PC-9 (cell line): ENCODE measurements at regions of chr21 and their contacts with region 1.

Region 1: DNA sequence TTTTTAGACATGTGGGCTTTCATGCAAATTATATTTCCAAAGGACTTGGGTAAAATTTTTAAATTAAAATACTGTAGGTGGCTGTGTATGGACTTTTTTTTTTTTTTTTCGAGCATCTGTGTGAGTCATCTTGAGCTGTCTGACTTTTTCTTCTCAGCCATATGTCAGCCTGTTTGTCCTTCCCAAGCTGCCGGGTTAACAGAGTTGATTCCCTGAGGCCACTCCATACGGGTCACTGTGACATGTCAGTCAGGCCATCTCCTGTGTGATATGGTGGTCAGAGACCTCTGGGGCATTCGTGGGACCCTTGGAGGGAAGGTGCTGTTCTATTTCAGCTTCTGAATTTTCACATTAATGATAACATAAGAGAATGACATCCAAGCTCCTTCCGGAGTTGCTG is 148.3 kb downstream of the KCNJ6 start:
- DNase-seq: no peak
- H3K4me3 ChIP-seq: no peak overlapping the region
- H3K27ac ChIP-seq: no peak overlapping the region
- H3K4me1 ChIP-seq: no peaks in the 10 kb centered on the region
- H3K27me3 ChIP-seq: peaks cover 11% of the 10 kb centered on the region; the same call in 1 of the 2 replicates
- CTCF ChIP-seq: no peak

Region 2: GRCh38 chr21:37631319-37632117 is 136.5 kb before region 1 on chr21:
- CTCF ChIA-PET with region 1: no interaction called
- POLR2A ChIA-PET with region 1: no interaction called
- intact Hi-C with region 1: no loop called
- DNase-seq: peak; percentile 21 to 45
- H3K4me3 ChIP-seq: peak overlapping the region; percentile 18; the same call in 1 of the 2 replicates
- H3K27ac ChIP-seq: no peak overlapping the region
- H3K4me1 ChIP-seq: peaks cover 18% of the 10 kb centered on the region
- H3K27me3 ChIP-seq: no peaks in the 10 kb centered on the region
- CTCF ChIP-seq: no peak

Region 3: DNA sequence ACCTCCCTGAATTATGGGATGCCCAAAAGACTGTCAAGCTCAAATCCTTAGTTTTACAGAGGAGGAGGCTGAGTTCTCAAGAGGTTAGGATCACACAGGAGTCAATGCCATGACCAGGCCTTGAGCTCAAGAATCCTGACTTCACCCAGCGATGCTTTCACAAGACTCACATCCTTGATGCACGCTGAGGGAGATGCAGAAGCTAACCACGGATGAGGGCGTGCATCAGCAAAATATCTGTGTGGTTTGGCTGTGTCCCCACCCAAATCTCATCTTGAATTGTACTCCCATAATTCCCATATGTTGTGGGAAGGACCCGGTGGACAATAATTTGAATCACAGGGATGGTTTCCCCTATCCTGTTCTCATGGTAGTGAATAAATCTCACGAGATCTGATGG is 15.0 kb after region 1 on chr21:
- CTCF ChIA-PET with region 1: no interaction called
- POLR2A ChIA-PET with region 1: no interaction called
- intact Hi-C with region 1: loop called (anchors 1 kb)
- DNase-seq: no peak
- H3K4me3 ChIP-seq: no peak overlapping the region
- H3K27ac ChIP-seq: no peak overlapping the region
- H3K4me1 ChIP-seq: no peaks in the 10 kb centered on the region
- H3K27me3 ChIP-seq: no peaks in the 10 kb centered on the region; the same call in 1 of the 2 replicates
- CTCF ChIP-seq: no peak

Region 4: GRCh38 chr21:38037416-38037815 is 269.4 kb after region 1 on chr21:
- CTCF ChIA-PET with region 1: no interaction called
- POLR2A ChIA-PET with region 1: no interaction called
- intact Hi-C with region 1: no loop called
- DNase-seq: no peak
- H3K4me3 ChIP-seq: no peak overlapping the region
- H3K27ac ChIP-seq: no peak overlapping the region
- H3K4me1 ChIP-seq: no peaks in the 10 kb centered on the region
- H3K27me3 ChIP-seq: no peaks in the 10 kb centered on the region
- CTCF ChIP-seq: no peak